ENCODE measurements at regions of chr3 and their contacts with region 1.

Region 1: GRCh38 chr3:47989981-47990440 is 26.2 kb downstream of the MAP4 start:
- DNase-seq: peak; percentile 46 to 84
- ATAC-seq: peak; percentile 95 to 98; a peak in 5 of 6 replicates
- H3K4me3 ChIP-seq: no peak overlapping the region
- H3K27ac ChIP-seq: no peak overlapping the region
- H3K4me1 ChIP-seq: peaks cover 15% of the 10 kb centered on the region
- CTCF ChIP-seq: peak; percentile 80
- EP300 ChIP-seq: no peak
- POLR2A ChIP-seq: no peak
- RAD21 ChIP-seq: peak; percentile 78 to 83

Region 2: GRCh38 chr3:47824541-47825473 is 165.2 kb before region 1 on chr3:
- CTCF ChIA-PET with region 1: interaction called, 13 read pairs
- POLR2A ChIA-PET with region 1: interaction called, 3 read pairs
- DNase-seq: peak; percentile 81 to 89
- ATAC-seq: peak; percentile 100
- H3K4me3 ChIP-seq: peak overlapping the region; percentile 78
- H3K27ac ChIP-seq: peak overlapping the region; percentile 87 to 92
- H3K4me1 ChIP-seq: peaks cover 12% of the 10 kb centered on the region; the same call in 2 of the 3 replicates
- CTCF ChIP-seq: peak; percentile 75
- EP300 ChIP-seq: no peak
- POLR2A ChIP-seq: peak; percentile 54
- RAD21 ChIP-seq: no peak; a peak in 1 of 5 replicates

Region 3: DNA sequence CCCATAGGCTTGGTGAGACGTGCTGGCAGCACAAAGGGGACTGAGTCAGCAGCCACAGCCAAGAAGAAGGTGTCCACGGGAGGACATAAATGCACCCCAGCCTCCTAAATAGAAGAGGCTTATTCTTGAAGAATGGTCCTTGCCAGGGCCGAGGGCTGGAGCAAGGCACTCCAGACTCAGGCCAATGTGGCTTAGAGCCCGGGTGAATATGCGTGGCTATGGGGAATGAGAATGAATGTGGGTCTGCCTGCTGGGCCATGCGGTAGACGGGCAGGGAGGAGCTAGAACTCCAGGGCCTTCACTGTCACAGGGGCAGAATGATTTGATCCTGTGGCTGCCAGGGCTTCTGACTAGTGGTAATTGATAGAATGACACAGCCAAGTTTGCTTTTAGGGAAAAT is 153.0 kb before region 1 on chr3:
- CTCF ChIA-PET with region 1: interaction called, 18 read pairs
- POLR2A ChIA-PET with region 1: interaction called, 5 read pairs
- DNase-seq: no peak
- ATAC-seq: peak in 1 of 2 experiments; percentile 26; a peak in 3 of 6 replicates
- H3K4me3 ChIP-seq: no peak overlapping the region
- H3K27ac ChIP-seq: no peak overlapping the region
- H3K4me1 ChIP-seq: no peaks in the 10 kb centered on the region
- CTCF ChIP-seq: no peak
- EP300 ChIP-seq: no peak
- POLR2A ChIP-seq: no peak
- RAD21 ChIP-seq: no peak

Region 4: GRCh38 chr3:48001991-48002390 is 12.0 kb after region 1 on chr3:
- CTCF ChIA-PET with region 1: interaction called, 35 read pairs
- POLR2A ChIA-PET with region 1: no interaction called
- DNase-seq: no peak
- ATAC-seq: no peak
- H3K4me3 ChIP-seq: no peak overlapping the region
- H3K27ac ChIP-seq: no peak overlapping the region
- H3K4me1 ChIP-seq: no peaks in the 10 kb centered on the region
- CTCF ChIP-seq: no peak
- EP300 ChIP-seq: no peak
- POLR2A ChIP-seq: no peak
- RAD21 ChIP-seq: no peak

Region 5: DNA sequence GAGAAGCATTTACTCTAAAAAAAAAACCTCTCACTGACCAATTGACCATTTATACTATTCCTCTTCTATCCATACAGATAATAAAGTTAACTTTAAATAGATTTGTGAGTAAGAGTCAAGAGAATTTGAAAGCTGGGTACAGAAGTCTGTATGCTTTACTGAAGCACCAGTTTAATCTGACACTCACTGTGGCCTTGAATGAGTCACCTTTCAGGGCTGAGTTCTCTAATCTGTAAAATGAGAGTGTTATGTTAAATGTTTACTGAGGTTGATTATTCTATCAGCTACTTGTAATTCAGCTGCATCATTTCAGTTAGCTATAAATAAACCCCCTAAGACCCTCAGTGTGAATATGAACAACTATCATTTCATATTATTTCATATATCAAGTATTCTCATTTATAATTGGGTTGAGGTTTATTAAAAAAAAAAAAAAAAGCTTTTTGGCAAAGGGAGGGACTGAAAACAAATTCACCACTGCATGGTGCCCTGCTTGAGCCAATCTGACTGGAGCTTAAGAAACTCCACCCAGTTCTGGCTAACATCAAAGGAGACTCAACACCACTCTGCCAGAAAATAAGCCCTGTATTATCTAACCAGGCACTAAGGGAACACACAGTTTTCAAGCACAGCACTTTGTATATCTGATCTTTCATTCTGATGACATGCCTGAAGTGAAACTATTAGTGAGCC is 23.4 kb after region 1 on chr3:
- CTCF ChIA-PET with region 1: interaction called, 10 read pairs
- POLR2A ChIA-PET with region 1: no interaction called
- DNase-seq: peak in 1 of 2 experiments; percentile 18
- ATAC-seq: peak in 1 of 2 experiments; percentile 63; a peak in 3 of 6 replicates
- H3K4me3 ChIP-seq: no peak overlapping the region
- H3K27ac ChIP-seq: peak overlapping the region in 1 of 2 experiments; percentile 45; a peak in 1 of 6 replicates
- H3K4me1 ChIP-seq: peaks cover 64% of the 10 kb centered on the region
- CTCF ChIP-seq: no peak
- EP300 ChIP-seq: no peak
- POLR2A ChIP-seq: no peak
- RAD21 ChIP-seq: no peak

Region 6: GRCh38 chr3:48084929-48085328 is 94.9 kb after region 1 on chr3:
- CTCF ChIA-PET with region 1: no interaction called
- POLR2A ChIA-PET with region 1: no interaction called
- DNase-seq: no peak
- ATAC-seq: no peak
- H3K4me3 ChIP-seq: no peak overlapping the region
- H3K27ac ChIP-seq: peak overlapping the region in 1 of 2 experiments; percentile 98; a peak in 2 of 6 replicates
- H3K4me1 ChIP-seq: peaks cover 55% of the 10 kb centered on the region
- CTCF ChIP-seq: no peak
- EP300 ChIP-seq: no peak
- POLR2A ChIP-seq: no peak
- RAD21 ChIP-seq: no peak

Region 7: DNA sequence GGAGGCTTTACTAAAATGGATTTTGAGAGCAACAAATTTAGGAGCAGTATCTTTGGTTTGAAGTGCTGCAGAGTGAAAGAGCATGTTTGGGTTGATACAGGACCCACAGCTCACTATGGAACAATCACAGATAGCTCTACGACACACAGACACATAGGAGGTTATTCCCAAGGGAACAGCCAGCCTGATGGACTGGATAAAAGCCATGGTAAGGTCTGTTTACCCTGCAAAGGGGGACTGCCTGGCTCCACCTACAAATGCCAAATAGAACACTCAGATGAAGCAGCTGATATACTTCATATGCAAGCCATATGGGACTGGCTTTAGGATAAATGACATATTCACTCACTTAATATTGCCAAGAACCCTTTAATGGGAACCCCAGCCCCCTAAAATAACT is 122.8 kb after region 1 on chr3:
- CTCF ChIA-PET with region 1: no interaction called
- POLR2A ChIA-PET with region 1: no interaction called
- DNase-seq: no peak
- ATAC-seq: no peak
- H3K4me3 ChIP-seq: no peak overlapping the region
- H3K27ac ChIP-seq: no peak overlapping the region
- H3K4me1 ChIP-seq: no peaks in the 10 kb centered on the region
- CTCF ChIP-seq: no peak
- EP300 ChIP-seq: no peak
- POLR2A ChIP-seq: no peak
- RAD21 ChIP-seq: no peak

Region 8: GRCh38 chr3:48151058-48151806 is 161.2 kb after region 1 on chr3:
- CTCF ChIA-PET with region 1: interaction called, 26 read pairs
- POLR2A ChIA-PET with region 1: no interaction called
- DNase-seq: peak; percentile 62 to 80
- ATAC-seq: peak; percentile 96 to 99
- H3K4me3 ChIP-seq: no peak overlapping the region
- H3K27ac ChIP-seq: peak overlapping the region in 1 of 2 experiments; percentile 37; a peak in 1 of 6 replicates
- H3K4me1 ChIP-seq: peaks cover 25% of the 10 kb centered on the region
- CTCF ChIP-seq: peak; percentile 70
- EP300 ChIP-seq: no peak
- POLR2A ChIP-seq: no peak
- RAD21 ChIP-seq: peak; percentile 87 to 94

Region 9: GRCh38 chr3:48157950-48158376 is 168.0 kb after region 1 on chr3:
- CTCF ChIA-PET with region 1: interaction called, 11 read pairs
- POLR2A ChIA-PET with region 1: no interaction called
- DNase-seq: peak; percentile 53 to 58
- ATAC-seq: peak; percentile 51 to 65; a peak in 4 of 6 replicates
- H3K4me3 ChIP-seq: no peak overlapping the region
- H3K27ac ChIP-seq: peak overlapping the region in 1 of 2 experiments; percentile 54; a peak in 3 of 6 replicates
- H3K4me1 ChIP-seq: peaks cover 36% of the 10 kb centered on the region
- CTCF ChIP-seq: peak; percentile 54
- EP300 ChIP-seq: no peak
- POLR2A ChIP-seq: no peak
- RAD21 ChIP-seq: peak; percentile 43 to 52; a peak in 4 of 5 replicates

Region 10: GRCh38 chr3:48301020-48301796 is 311.2 kb after region 1 on chr3:
- CTCF ChIA-PET with region 1: no interaction called
- POLR2A ChIA-PET with region 1: no interaction called
- DNase-seq: peak; percentile 67 to 89
- ATAC-seq: peak; percentile 97 to 98
- H3K4me3 ChIP-seq: peak within 1 kb of the TSS; percentile 82
- H3K27ac ChIP-seq: peak within 1 kb of the TSS; percentile 97 to 99
- H3K4me1 ChIP-seq: peaks cover 7% of the 10 kb centered on the region
- CTCF ChIP-seq: no peak
- EP300 ChIP-seq: no peak
- POLR2A ChIP-seq: peak; percentile 56
- RAD21 ChIP-seq: no peak

Measured in A549 (cell line).